Panc1 (cell line): ENCODE measurements at regions of chr4 and their contacts with region 1.

Region 1: GRCh38 chr4:122448936-122449335 is 7.6 kb downstream of the IL2 start:
- DNase-seq: no peak
- ATAC-seq: no peak
- H3K4me3 ChIP-seq: no peak overlapping the region
- H3K27ac ChIP-seq: no peak overlapping the region
- H3K4me1 ChIP-seq: no peaks in the 10 kb centered on the region
- H3K27me3 ChIP-seq: no peaks in the 10 kb centered on the region
- CTCF ChIP-seq: no peak

Region 2: DNA sequence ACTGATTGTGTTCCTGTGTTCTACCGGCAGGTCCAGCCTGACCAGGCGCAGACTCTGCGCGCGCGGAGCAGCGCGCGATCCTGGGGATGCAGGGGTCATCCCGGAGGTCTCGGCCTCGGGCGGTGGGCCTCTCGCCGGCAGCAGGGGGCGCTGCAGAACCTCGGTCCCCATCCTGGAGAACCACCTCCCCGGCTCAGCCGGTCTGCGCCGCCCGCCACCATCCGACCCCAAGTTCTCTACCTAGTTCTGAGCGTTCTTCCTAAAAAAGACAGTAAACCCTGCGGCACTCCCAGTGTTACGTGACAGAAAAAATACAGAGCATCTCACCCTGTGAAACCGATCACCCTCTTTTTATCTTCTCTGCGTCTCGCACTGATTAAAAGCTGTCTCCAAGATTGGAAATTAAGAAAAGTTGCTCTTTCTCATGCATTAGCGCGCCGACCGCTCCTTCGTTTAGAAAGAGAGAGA is 498.7 kb before region 1 on chr4:
- CTCF ChIA-PET with region 1: no interaction called
- POLR2A ChIA-PET with region 1: interaction called, 12 read pairs
- in situ Hi-C with region 1: no loop called
- intact Hi-C with region 1: no loop called
- DNase-seq: no peak
- ATAC-seq: peak; percentile 88
- H3K4me3 ChIP-seq: peak overlapping the region; percentile 32 to 56
- H3K27ac ChIP-seq: no peak overlapping the region
- H3K4me1 ChIP-seq: no peaks in the 10 kb centered on the region
- H3K27me3 ChIP-seq: peaks cover 17% of the 10 kb centered on the region
- CTCF ChIP-seq: peak; percentile 82